ENCODE measurements at regions of chr3 and their contacts with region 1.

Region 1: GRCh38 chr3:50245831-50246516 is 10.0 kb downstream of the GNAI2 start:
- DNase-seq: peak; percentile 96
- ATAC-seq: peak; percentile 83
- H3K4me3 Mint-ChIP-seq: peak overlapping the region; percentile 76
- H3K27ac Mint-ChIP-seq: peak overlapping the region; percentile 91
- H3K4me1 Mint-ChIP-seq: peaks cover 74% of the 10 kb centered on the region
- H3K27me3 Mint-ChIP-seq: no peaks in the 10 kb centered on the region

Region 2: DNA sequence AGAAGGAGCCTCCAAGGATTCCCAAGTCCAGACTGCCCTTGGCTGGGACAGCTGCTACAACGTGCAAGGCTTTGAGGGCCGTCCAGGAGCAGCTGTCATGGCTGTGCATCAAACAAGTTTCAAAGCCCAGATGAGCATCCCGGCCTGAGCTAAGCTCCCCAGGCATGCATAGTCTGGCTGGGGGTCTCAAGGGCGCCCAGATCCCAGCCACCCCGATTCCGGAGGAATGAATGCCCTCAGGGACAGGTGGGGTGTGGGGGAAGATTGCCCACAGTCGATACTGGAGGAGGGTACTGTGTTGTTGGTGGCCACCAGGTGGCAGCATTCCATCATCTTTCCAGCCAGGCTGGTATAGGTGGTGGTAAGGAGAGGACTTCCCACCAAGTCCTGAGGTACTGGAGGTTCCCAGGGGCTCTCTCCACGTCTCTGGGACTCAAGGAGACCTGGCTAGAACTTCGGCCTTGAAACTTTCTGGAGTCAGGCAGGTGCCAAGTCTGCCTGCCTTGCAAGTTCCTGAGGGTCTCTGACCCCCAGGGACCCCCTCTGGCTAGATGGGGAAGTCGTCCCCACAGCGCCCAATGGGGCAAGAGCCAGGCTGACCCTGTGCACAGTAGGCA is 124.5 kb before region 1 on chr3:
- CTCF ChIA-PET with region 1: interaction called, 12 read pairs
- POLR2A ChIA-PET with region 1: no interaction called
- DNase-seq: peak; percentile 81
- ATAC-seq: peak; percentile 86
- H3K4me3 Mint-ChIP-seq: no peak overlapping the region
- H3K27ac Mint-ChIP-seq: no peak overlapping the region
- H3K4me1 Mint-ChIP-seq: no peaks in the 10 kb centered on the region
- H3K27me3 Mint-ChIP-seq: no peaks in the 10 kb centered on the region

Region 3: GRCh38 chr3:50227390-50228183 is 18.4 kb before region 1 on chr3:
- CTCF ChIA-PET with region 1: interaction called, 180 read pairs
- POLR2A ChIA-PET with region 1: interaction called, 23 read pairs
- DNase-seq: peak; percentile 94
- ATAC-seq: peak; percentile 89
- H3K4me3 Mint-ChIP-seq: peak overlapping the region; percentile 91
- H3K27ac Mint-ChIP-seq: peak overlapping the region; percentile 90
- H3K4me1 Mint-ChIP-seq: peaks cover 34% of the 10 kb centered on the region
- H3K27me3 Mint-ChIP-seq: peaks cover 16% of the 10 kb centered on the region

Region 4: DNA sequence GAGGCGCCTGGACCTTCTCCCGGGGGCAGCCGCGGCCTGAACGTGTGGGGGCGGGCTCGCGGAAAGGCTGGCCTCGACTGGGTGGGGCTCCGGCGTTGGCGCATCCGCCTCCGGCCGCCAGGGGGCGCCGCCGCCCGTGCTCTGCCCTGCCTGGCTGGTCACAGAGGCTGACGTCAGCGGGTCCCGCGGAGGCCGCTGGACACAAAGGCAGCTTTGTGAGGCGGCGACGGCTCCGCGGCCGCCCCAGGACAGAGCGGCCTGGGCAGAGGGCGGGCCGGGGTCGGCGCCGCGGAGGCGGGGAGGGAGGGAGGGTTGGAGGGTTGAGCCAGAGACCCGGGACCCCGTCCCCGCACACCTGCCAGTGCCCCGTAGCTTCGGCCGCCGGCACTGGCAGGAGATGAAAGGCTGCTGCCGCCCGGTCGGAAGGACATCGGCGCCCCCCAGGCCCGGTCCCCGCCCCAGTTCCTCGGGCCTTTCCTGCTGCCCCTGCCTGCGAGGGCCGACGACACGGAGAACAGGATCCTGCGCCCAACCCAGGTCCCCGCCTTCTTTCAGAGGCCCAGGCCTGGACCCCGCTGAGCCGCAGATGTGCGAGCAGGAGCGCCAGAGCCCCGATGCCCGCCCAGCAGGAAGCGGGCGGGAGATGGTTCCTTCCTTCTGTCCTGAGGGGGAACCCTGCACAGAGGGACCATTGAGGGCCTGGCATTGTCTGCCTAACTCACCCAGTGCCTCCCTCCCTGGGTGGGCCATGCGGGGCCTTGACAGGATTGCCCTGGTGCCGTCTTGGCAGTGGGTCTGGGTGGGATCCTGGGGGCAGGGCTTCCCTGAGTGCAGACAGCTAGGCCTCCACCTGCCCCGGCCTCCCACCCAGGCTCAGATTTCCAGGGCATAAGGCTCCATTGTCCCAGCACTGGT is 14.3 kb after region 1 on chr3:
- CTCF ChIA-PET with region 1: interaction called, 45 read pairs
- POLR2A ChIA-PET with region 1: interaction called, 5 read pairs
- DNase-seq: peak; percentile 87
- ATAC-seq: peak; percentile 97
- H3K4me3 Mint-ChIP-seq: peak overlapping the region; percentile 69
- H3K27ac Mint-ChIP-seq: peak overlapping the region; percentile 63
- H3K4me1 Mint-ChIP-seq: peaks cover 10% of the 10 kb centered on the region
- H3K27me3 Mint-ChIP-seq: no peaks in the 10 kb centered on the region

Region 5: DNA sequence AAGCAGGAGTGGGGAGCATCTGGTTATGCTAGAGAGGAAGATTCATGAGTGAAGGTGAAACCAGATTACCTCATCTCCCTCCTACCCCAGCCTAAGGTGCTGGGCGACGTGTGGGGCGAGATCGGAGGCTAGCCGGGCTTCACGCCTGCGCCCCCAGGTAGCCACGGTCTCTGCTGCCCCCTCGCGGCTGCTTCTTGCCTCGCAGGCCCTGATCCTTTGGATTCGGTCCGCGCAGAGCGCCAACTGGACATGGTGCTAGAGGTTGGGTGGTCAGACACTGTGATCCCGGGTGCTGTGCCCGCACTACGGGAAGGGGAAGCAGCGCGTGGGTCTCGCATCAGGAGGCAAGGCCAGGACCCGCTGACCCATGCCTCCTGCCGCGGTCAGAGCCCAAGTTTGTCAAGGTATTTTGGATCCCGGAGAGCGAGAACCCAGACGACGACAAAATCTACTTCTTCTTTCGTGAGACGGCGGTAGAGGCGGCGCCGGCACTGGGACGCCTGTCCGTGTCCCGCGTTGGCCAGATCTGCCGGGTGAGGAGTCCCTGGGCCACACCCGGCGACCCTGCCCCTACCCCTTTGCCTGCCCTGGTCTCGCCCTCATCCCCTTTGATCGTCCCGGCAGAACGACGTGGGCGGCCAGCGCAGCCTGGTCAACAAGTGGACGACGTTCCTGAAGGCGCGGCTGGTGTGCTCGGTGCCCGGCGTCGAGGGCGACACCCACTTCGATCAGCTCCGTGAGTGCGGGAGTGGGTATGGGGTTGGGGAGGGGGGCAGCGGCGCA is 27.1 kb after region 1 on chr3:
- CTCF ChIA-PET with region 1: interaction called, 17 read pairs
- POLR2A ChIA-PET with region 1: interaction called, 5 read pairs
- DNase-seq: peak; percentile 93
- ATAC-seq: peak; percentile 90
- H3K4me3 Mint-ChIP-seq: peak overlapping the region; percentile 72
- H3K27ac Mint-ChIP-seq: peak overlapping the region; percentile 52
- H3K4me1 Mint-ChIP-seq: peaks cover 34% of the 10 kb centered on the region
- H3K27me3 Mint-ChIP-seq: peaks cover 40% of the 10 kb centered on the region

Region 6: GRCh38 chr3:50298836-50299637 is 53.1 kb after region 1 on chr3 and contains the starts of genes HYAL3 and NAA80:
- CTCF ChIA-PET with region 1: interaction called, 12 read pairs
- POLR2A ChIA-PET with region 1: interaction called, 3 read pairs
- DNase-seq: peak; percentile 100
- ATAC-seq: peak; percentile 87
- H3K4me3 Mint-ChIP-seq: peak within 1 kb of the TSS; percentile 97
- H3K27ac Mint-ChIP-seq: peak within 1 kb of the TSS; percentile 99
- H3K4me1 Mint-ChIP-seq: peaks cover 32% of the 10 kb centered on the region
- H3K27me3 Mint-ChIP-seq: no peaks in the 10 kb centered on the region
- total RNA-seq, gene HYAL3: 9.7 to 12.7 TPM
- total RNA-seq, gene NAA80: 26.8 to 28.5 TPM

Region 7: DNA sequence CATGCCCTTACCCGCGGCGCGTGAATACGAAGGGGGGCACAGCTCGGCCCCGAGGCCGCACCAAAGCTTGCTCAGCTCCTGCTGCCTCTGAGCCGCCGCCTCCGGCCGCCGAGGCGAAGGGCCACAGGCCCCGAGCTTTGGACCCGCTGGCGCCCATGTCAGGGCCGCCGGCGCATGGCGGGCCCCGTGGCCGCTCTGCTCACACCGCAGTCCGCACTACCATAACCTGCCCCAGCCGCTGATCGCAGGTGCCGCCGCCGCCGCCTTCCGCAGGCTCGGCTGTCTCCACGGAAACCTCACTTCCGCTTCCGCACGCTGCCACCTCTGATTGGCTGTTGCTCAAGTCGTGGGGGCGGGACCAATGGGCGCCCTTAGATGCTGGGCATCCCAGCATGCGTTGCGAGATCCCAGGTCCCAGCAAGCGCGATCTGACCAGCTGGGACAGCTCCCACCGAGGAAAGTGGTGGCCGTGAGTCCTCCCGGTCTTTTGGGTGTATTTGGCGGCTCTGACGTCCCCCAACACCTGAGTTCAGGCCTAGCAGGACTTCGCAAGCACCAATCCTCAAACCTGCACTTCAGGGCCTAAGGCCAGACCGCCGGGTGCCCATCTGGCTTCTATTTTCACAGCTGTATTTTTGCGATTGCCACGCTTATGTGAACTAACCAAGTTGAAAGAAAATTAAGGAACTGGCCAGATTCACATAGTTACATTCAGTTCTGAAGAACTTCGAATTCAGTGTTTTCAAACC is 82.1 kb after region 1 on chr3 and contains the start of gene TUSC2:
- CTCF ChIA-PET with region 1: interaction called, 17 read pairs
- POLR2A ChIA-PET with region 1: interaction called, 3 read pairs
- DNase-seq: peak; percentile 97
- ATAC-seq: peak; percentile 91
- H3K4me3 Mint-ChIP-seq: peak within 1 kb of the TSS; percentile 87
- H3K27ac Mint-ChIP-seq: peak within 1 kb of the TSS; percentile 89
- H3K4me1 Mint-ChIP-seq: peaks cover 42% of the 10 kb centered on the region
- H3K27me3 Mint-ChIP-seq: no peaks in the 10 kb centered on the region
- total RNA-seq, gene TUSC2: 18.5 to 20.8 TPM

Measured in activated CD8-positive, alpha-beta T cell treated with anti-CD3 and anti-CD28 coated beads, Interleukin-2, amount 10 ng/mL, durations not matched to agents 7 days and 5 days (primary cell).